Right lobe of liver (tissue), 6 donors: ENCODE measurements at regions of chr3 and their contacts with region 1.

Region 1: DNA sequence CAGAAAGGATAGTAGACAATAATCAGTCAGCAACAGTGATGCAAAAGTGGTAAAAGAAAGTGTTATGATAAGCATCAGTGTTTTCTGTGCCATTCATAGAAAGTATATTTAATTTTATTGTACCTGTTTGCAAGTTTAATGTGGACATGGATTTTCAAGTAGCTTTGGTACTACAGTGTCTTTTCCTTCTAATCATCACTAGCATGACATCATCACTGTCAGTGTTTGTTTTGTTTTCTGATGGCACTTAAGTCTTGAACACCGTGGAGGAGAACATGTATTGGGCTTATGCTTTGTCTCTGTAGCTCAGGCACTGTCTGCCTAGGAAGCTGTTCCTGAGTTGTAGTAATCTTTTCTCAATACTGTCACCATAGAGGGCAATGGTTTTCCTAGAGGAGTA is 41.9 kb downstream of the SETD5 start:
- DNase-seq: no peak
- ATAC-seq: no peak
- H3K4me3 ChIP-seq: no peak overlapping the region
- H3K27ac ChIP-seq: no peak overlapping the region
- H3K4me1 ChIP-seq: no peaks in the 10 kb centered on the region
- H3K27me3 ChIP-seq: no peaks in the 10 kb centered on the region
- CTCF ChIP-seq: no peak
- POLR2A ChIP-seq: no peak

Region 2: GRCh38 chr3:9387322-9387655 is 52.0 kb before region 1 on chr3:
- intact Hi-C with region 1: loop called in 1 of 2 experiments (anchors 5 kb)
- DNase-seq: no peak
- ATAC-seq: no peak
- H3K4me3 ChIP-seq: no peak overlapping the region
- H3K27ac ChIP-seq: no peak overlapping the region
- H3K4me1 ChIP-seq: peaks cover 0 to 1% (median 0%) of the 10 kb centered on the region in 4 donors
- H3K27me3 ChIP-seq: no peaks in the 10 kb centered on the region
- CTCF ChIP-seq: no peak
- POLR2A ChIP-seq: no peak

Region 3: DNA sequence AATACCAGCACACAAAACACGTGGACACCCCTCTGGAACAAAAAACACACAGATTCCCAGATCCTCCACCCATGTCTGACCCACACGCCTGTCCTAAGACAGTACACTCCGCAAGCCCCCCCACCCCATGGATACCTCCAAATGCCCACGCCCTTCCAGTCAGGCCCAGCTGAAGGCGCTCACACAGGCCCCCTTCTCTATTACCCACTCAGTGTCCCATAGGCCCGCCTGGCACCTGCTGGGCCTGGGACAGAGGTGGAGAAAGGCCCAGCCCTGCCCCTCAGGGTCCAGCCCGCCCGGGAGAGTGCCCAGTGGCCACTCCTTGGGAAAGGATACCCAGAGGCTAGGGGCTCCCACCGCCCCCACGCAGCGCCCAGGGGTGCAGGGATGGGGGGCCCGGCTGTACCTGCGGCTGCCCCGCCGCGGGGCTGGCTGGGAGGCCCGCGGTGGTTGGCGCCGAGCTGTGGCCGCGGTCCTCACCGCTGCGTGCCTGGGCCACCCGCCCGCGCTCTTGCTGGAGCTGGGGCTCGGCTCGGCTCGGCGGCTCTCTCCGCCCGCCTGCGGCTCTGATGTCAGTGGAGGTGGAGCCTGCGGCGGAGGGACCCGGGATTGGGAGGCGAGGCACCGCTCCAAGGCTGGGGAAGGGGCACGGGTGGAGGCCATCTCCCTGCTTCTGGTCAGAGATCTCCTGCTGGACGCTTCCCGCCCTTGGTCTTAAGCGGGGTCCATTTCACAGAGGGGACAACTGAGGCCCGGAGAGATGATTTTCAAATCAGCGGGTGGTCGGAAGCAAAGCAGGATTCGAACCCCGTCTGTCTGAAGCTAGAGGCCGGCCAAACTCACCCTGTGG is 330.3 kb after region 1 on chr3 and contains the start of gene CAMK1:
- intact Hi-C with region 1: no loop called
- DNase-seq: peak; percentile 91 to 92 (median 92)
- ATAC-seq: peak; percentile 90 to 95 (median 93)
- H3K4me3 ChIP-seq: peak within 1 kb of the TSS; percentile 65 to 95 (median 77)
- H3K27ac ChIP-seq: peak within 1 kb of the TSS; percentile 81 to 84 (median 81)
- H3K4me1 ChIP-seq: peaks cover 0 to 18% (median 4%) of the 10 kb centered on the region in 4 donors
- H3K27me3 ChIP-seq: no peaks in the 10 kb centered on the region
- CTCF ChIP-seq: no peak
- POLR2A ChIP-seq: peak; percentile 94
- total RNA-seq, gene CAMK1: 10.8 to 33.4 (median 24.5) TPM